IMR-90 (cell line): ENCODE measurements at regions of chr14 and their contacts with region 1.

Region 1: DNA sequence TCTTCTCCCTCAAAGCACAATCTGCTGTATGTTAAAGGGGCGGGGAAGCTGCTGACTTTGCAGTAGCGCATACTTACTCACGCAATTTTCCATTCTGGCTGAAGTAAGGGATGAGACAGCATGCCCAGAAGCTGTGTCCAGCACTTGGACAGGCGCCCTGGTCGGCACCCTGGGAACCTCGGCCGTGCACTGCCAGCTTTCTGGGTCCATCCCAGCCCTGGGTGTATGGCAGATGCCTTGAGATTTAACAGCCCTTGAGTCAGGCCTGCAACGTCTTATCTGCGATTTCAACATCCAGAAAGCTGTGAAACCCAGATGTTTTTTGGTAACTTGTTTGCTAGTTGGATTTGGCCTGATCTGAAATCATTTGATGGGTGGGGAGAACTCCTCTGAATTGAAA is 16.1 kb downstream of the EML1 start:
- DNase-seq: peak; percentile 58
- ATAC-seq: peak; percentile 63
- H3K4me3 ChIP-seq: no peak overlapping the region
- H3K27ac ChIP-seq: no peak overlapping the region
- H3K4me1 ChIP-seq: peaks cover 16% of the 10 kb centered on the region
- H3K27me3 ChIP-seq: no peaks in the 10 kb centered on the region
- CTCF ChIP-seq: no peak
- POLR2A ChIP-seq: no peak
- RAD21 ChIP-seq: no peak

Region 2: DNA sequence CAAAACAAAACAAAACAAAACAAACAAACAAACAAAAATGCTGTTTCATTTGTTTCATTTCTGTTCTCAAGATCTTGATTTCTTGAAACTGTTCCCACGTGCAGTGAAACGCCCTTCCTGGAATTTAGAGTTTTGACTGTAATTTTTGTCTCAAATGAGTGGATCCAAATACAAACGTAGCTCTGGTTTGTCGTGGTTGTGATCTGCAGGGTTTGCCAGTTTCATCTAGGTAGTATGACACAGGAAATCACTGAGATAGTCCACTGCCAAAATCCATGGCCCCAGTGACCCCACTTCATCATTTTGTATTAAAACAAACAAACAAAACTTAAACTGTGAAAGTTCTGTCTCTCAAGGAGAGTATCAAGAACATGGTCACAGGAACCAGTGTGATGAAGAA is 1375.9 kb before region 1 on chr14:
- CTCF ChIA-PET with region 1: no interaction called
- POLR2A ChIA-PET with region 1: no interaction called
- dilution Hi-C with region 1: no loop called
- in situ Hi-C with region 1: no loop called
- intact Hi-C with region 1: no loop called
- DNase-seq: no peak
- ATAC-seq: no peak
- H3K4me3 ChIP-seq: no peak overlapping the region
- H3K27ac ChIP-seq: no peak overlapping the region
- H3K4me1 ChIP-seq: no peaks in the 10 kb centered on the region
- H3K27me3 ChIP-seq: no peaks in the 10 kb centered on the region
- CTCF ChIP-seq: no peak
- POLR2A ChIP-seq: no peak
- RAD21 ChIP-seq: no peak

Region 3: DNA sequence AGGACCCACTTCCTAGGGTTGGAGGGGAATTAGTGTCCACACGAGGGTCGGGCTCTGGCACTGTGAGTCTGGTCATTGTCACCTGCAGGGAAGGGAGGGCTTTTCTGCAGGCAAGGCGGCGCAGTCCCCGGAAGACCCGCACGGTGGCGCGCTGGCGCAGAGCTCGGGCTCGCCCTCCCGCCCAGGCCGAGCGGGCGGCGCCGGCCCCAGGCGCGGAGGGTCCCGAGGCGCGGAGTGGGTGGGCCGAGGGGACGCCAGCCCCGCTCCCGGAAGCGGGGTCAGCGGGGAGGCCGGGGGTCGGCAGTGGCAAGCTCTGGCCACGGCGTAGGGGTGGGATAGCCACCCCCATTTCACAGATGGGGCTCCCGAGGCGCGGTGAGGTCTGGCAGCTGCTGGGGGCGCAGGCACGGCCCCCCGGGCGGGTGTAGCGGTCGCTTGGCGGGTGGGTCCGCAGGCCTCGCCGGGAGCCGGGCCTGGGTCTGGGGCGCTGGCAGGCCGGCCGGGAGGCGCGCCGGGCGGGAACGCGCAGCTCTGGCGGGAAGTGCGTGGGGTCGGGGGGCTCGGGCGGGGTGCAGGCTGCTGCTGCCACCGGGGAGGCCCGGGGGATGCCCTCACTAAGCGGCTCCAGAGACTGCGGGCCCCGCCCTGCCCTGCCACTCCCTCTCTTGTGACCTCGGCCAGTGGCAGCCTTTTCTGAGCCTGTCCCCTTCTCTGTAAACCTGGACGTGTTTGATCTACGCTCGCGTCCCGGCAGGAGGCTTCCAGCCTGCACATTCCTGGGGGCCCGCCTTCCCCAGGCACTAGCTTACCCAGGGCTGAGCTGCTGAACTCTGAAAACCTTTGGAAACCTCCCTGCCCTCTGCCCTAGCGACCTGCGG is 79.1 kb before region 1 on chr14:
- CTCF ChIA-PET with region 1: interaction called, 3 read pairs
- POLR2A ChIA-PET with region 1: no interaction called
- dilution Hi-C with region 1: no loop called
- in situ Hi-C with region 1: no loop called
- intact Hi-C with region 1: loop called (anchors 5 kb)
- DNase-seq: peak; percentile 19
- ATAC-seq: peak; percentile 98
- H3K4me3 ChIP-seq: peak overlapping the region; percentile 49
- H3K27ac ChIP-seq: no peak overlapping the region; the same call in 1 of the 2 replicates
- H3K4me1 ChIP-seq: peaks cover 3% of the 10 kb centered on the region; the same call in 1 of the 2 replicates
- H3K27me3 ChIP-seq: peaks cover 6% of the 10 kb centered on the region; the same call in 1 of the 2 replicates
- CTCF ChIP-seq: peak; percentile 91
- POLR2A ChIP-seq: no peak
- RAD21 ChIP-seq: peak; percentile 95

Region 4: GRCh38 chr14:99879401-99880295 is 70.3 kb after region 1 on chr14:
- CTCF ChIA-PET with region 1: no interaction called
- POLR2A ChIA-PET with region 1: no interaction called
- dilution Hi-C with region 1: no loop called
- in situ Hi-C with region 1: no loop called
- intact Hi-C with region 1: loop called (anchors 5 kb)
- DNase-seq: peak; percentile 88
- ATAC-seq: peak; percentile 88
- H3K4me3 ChIP-seq: no peak overlapping the region
- H3K27ac ChIP-seq: peak overlapping the region; percentile 86; the same call in 1 of the 2 replicates
- H3K4me1 ChIP-seq: peaks cover 15% of the 10 kb centered on the region
- H3K27me3 ChIP-seq: no peaks in the 10 kb centered on the region
- CTCF ChIP-seq: no peak
- POLR2A ChIP-seq: no peak
- RAD21 ChIP-seq: peak; percentile 23; the same call in 1 of the 2 replicates